Breast epithelium (tissue), 4 donors: ENCODE measurements at regions of chr18 and their contacts with region 1.

Region 1: DNA sequence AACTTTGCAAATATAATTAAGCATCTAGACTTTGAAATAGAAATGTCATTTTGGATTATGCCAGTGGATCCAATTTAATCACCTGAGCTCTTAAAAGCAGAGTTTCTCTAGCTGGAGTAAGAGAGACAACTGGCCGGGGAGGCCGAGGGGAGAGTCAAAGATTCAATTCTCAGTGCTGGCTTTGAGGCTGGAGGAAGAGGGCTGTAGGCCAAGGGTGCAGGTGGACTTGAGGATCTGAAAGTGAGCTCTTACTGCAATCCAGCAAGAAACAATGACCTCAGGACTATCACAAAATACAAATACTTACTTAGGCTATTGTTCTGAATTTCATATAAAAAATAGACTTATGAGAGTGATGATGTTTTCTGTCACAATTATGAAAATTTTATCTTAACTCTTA is 814.5 kb downstream of the CBLN2 start:
- DNase-seq: no peak
- H3K4me3 ChIP-seq: no peak overlapping the region
- H3K27ac ChIP-seq: no peak overlapping the region
- H3K4me1 ChIP-seq: no peaks in the 10 kb centered on the region
- H3K27me3 ChIP-seq: no peaks in the 10 kb centered on the region
- CTCF ChIP-seq: no peak
- POLR2A ChIP-seq: no peak

Region 2: GRCh38 chr18:71426441-71426840 is 303.2 kb before region 1 on chr18:
- intact Hi-C with region 1: no loop called
- DNase-seq: no peak
- H3K4me3 ChIP-seq: no peak overlapping the region
- H3K27ac ChIP-seq: no peak overlapping the region
- H3K4me1 ChIP-seq: no peaks in the 10 kb centered on the region
- H3K27me3 ChIP-seq: no peaks in the 10 kb centered on the region
- CTCF ChIP-seq: no peak
- POLR2A ChIP-seq: no peak

Region 3: DNA sequence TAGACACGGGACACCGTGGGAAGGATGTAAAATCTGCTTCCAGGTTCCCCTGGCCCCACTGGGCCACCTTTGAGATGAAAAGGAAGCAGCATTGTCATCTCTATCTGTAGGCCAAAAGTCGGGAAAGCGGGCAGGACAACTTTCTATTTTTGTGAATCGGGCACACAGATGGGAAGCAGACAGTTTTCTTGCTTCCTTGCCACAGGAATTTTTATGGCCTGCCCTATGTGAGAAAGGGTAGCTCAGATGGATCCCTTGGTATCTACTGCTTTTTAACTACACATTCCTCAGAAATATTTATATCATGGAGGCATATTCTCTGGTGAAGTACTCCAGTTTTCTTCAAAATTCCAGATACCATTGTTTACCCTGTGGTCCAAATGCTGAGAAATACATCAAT is 79.0 kb after region 1 on chr18:
- intact Hi-C with region 1: no loop called
- DNase-seq: no peak
- H3K4me3 ChIP-seq: no peak overlapping the region
- H3K27ac ChIP-seq: no peak overlapping the region
- H3K4me1 ChIP-seq: no peaks in the 10 kb centered on the region
- H3K27me3 ChIP-seq: no peaks in the 10 kb centered on the region
- CTCF ChIP-seq: no peak
- POLR2A ChIP-seq: no peak

Region 4: GRCh38 chr18:72119082-72119481 is 389.5 kb after region 1 on chr18:
- intact Hi-C with region 1: no loop called
- DNase-seq: no peak
- H3K4me3 ChIP-seq: no peak overlapping the region
- H3K27ac ChIP-seq: no peak overlapping the region
- H3K4me1 ChIP-seq: no peaks in the 10 kb centered on the region
- H3K27me3 ChIP-seq: no peaks in the 10 kb centered on the region
- CTCF ChIP-seq: no peak
- POLR2A ChIP-seq: no peak

Region 5: GRCh38 chr18:72566290-72566689 is 836.7 kb after region 1 on chr18:
- intact Hi-C with region 1: loop called (anchors 10 kb)
- DNase-seq: no peak
- H3K4me3 ChIP-seq: no peak overlapping the region
- H3K27ac ChIP-seq: no peak overlapping the region
- H3K4me1 ChIP-seq: no peaks in the 10 kb centered on the region
- H3K27me3 ChIP-seq: peaks cover 0 to 4% of the 10 kb centered on the region in 2 donors
- CTCF ChIP-seq: no peak
- POLR2A ChIP-seq: no peak